ENCODE measurements at regions of chr10 and their contacts with region 1.

Region 1: GRCh38 chr10:22251751-22252223 is 34.0 kb upstream of the EBLN1 start:
- DNase-seq: peak; percentile 74
- ATAC-seq: peak; percentile 37
- H3K4me3 Mint-ChIP-seq: peak overlapping the region; percentile 90
- H3K27ac Mint-ChIP-seq: peak overlapping the region; percentile 98
- H3K4me1 Mint-ChIP-seq: peaks cover 36% of the 10 kb centered on the region
- H3K27me3 Mint-ChIP-seq: peaks cover 15% of the 10 kb centered on the region
- CTCF ChIP-seq: no peak

Region 2: DNA sequence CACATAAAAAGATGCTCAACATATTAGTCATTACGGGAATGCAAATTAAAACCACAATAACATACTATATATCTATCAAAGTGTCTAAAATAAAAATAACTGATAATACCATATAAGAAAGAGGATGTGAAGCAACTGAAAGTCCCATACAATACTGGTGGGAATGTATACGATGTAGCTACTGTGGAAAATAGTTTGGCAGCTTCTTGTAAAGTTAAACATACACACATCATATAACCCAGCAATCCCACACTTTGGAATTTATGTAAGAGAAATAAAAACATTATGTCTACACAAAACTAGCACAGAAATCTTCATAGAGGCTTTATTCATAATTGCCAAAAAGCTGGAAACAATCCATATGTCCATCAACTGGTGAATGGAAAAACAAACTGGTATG is 53.9 kb after region 1 on chr10:
- CTCF ChIA-PET with region 1: no interaction called
- POLR2A ChIA-PET with region 1: no interaction called
- intact Hi-C with region 1: no loop called
- DNase-seq: no peak
- ATAC-seq: no peak
- H3K4me3 Mint-ChIP-seq: no peak overlapping the region
- H3K27ac Mint-ChIP-seq: no peak overlapping the region
- H3K4me1 Mint-ChIP-seq: peaks cover 3% of the 10 kb centered on the region
- H3K27me3 Mint-ChIP-seq: peaks cover 7% of the 10 kb centered on the region
- CTCF ChIP-seq: no peak

Region 3: DNA sequence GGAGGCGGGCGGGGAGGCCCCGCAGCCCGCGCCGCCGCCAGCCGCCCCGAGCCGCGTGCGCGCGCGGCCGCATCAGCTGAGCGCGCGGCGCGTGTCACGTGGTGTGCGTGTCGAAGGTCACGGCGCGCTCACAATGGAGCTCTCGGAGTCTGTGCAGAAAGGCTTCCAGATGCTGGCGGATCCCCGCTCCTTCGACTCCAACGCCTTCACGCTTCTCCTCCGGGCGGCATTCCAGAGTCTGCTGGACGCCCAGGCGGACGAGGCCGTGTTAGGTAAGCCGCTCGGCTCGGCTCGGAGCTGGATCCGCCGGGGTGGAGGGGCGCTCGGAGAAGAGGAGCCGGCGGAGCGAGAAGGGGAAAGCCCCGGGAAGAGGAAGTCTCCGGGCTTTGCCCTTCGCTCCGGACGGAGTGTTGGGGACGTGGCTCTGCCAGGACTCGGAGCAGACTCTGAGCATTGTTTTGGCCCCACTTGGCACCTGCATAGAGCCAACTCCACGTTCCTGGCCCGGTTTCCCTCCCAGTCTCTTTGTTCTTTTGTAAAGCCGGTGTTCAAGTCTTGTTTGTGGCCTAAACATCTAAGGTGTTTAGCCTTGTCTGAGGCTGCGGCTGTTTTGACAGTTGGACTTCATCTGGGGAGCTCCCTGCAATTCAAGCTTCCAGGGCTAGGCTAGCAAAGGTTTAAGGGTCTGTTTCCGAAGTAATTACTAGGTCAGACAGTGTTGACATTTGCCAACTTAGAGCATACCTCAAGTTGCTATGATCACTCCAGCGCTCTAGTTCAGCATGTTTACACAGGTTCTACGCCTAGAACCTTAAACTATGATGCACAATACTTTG is 64.7 kb after region 1 on chr10 and contains the start of gene COMMD3:
- CTCF ChIA-PET with region 1: interaction called, 3 read pairs
- POLR2A ChIA-PET with region 1: interaction called, 9 read pairs
- intact Hi-C with region 1: loop called (anchors 5 kb)
- DNase-seq: peak; percentile 82
- ATAC-seq: peak; percentile 67
- H3K4me3 Mint-ChIP-seq: peak within 1 kb of the TSS; percentile 88
- H3K27ac Mint-ChIP-seq: peak within 1 kb of the TSS; percentile 91
- H3K4me1 Mint-ChIP-seq: peaks cover 32% of the 10 kb centered on the region
- H3K27me3 Mint-ChIP-seq: peaks cover 17% of the 10 kb centered on the region
- CTCF ChIP-seq: no peak
- total RNA-seq, gene COMMD3: 64.7 to 68.7 TPM

Region 4: DNA sequence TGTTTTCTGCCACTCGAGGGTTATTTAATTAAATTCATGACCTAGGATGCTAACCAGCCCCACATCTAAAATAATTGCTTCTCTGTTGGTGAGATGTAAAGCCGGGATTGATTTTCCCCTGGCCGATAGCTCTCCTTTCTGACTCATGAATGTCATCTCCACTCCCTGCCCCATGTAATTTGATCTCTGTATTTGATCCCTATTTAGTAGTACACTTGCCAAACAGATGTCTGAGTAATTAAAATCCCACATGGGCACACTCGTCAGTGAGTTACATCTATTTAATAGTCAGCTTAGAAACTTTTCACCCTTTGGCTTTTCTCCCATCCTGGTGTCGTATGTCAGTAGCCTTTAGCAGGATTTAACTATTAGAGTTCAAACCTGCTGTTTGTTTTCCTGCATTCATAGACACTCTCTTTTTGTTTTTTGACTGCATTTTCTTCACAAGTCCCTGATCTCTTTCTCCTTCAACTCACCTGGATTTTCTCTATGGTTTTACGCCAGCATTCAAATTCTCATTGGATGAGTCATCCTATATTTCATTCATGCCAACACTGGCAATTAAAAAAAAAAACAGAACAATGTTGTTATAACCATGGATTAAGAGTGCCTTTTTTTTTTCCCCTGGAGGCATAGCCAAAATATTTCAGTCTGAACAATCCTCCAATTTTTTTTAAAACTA is 176.2 kb after region 1 on chr10:
- CTCF ChIA-PET with region 1: no interaction called
- POLR2A ChIA-PET with region 1: interaction called, 3 read pairs
- intact Hi-C with region 1: loop called (anchors 10 kb)
- DNase-seq: no peak
- ATAC-seq: no peak
- H3K4me3 Mint-ChIP-seq: no peak overlapping the region
- H3K27ac Mint-ChIP-seq: no peak overlapping the region
- H3K4me1 Mint-ChIP-seq: peaks cover 8% of the 10 kb centered on the region
- H3K27me3 Mint-ChIP-seq: peaks cover 15% of the 10 kb centered on the region
- CTCF ChIP-seq: no peak